WTC11 (cell line): ENCODE measurements at regions of chr1 and their contacts with region 1.

Region 1: DNA sequence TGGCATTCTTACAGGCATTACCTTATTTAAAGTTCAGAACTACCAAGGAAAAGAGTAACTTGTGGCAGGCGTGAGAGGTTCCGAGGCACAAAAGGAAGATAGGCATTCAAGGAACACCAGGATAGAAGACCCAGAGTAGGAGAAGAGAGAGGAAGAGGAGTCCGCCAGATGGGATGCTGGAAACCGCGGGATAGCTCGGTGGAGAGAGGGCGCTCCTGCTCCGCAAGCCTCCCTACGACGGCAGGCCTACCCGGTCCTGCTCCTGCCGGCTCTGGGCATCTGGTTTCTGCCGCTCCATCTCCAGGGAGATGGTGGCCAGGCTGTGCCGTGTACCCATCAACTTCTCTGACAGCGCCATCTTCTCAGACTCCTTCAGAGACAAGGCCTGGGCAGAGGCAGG is 5.4 kb upstream of the NBPF1 start:
- DNase-seq: peak; percentile 78
- ATAC-seq: peak; percentile 29
- H3K4me3 Mint-ChIP-seq: no peak overlapping the region
- H3K27ac Mint-ChIP-seq: no peak overlapping the region
- H3K4me1 Mint-ChIP-seq: no peaks in the 10 kb centered on the region
- H3K27me3 Mint-ChIP-seq: no peaks in the 10 kb centered on the region
- CTCF ChIP-seq: no peak

Region 2: GRCh38 chr1:16293538-16293937 is 325.2 kb before region 1 on chr1:
- CTCF ChIA-PET with region 1: no interaction called
- POLR2A ChIA-PET with region 1: no interaction called
- DNase-seq: no peak
- ATAC-seq: no peak
- H3K4me3 Mint-ChIP-seq: no peak overlapping the region
- H3K27ac Mint-ChIP-seq: no peak overlapping the region
- H3K4me1 Mint-ChIP-seq: peaks cover 8% of the 10 kb centered on the region
- H3K27me3 Mint-ChIP-seq: no peaks in the 10 kb centered on the region
- CTCF ChIP-seq: no peak

Region 3: GRCh38 chr1:16607433-16607851 is 11.3 kb before region 1 on chr1:
- CTCF ChIA-PET with region 1: interaction called, 56 read pairs
- POLR2A ChIA-PET with region 1: interaction called, 3 read pairs
- DNase-seq: no peak
- ATAC-seq: no peak
- H3K4me3 Mint-ChIP-seq: no peak overlapping the region
- H3K27ac Mint-ChIP-seq: no peak overlapping the region
- H3K4me1 Mint-ChIP-seq: no peaks in the 10 kb centered on the region
- H3K27me3 Mint-ChIP-seq: no peaks in the 10 kb centered on the region
- CTCF ChIP-seq: no peak

Region 4: GRCh38 chr1:16644193-16644481 is 25.4 kb after region 1 on chr1:
- CTCF ChIA-PET with region 1: interaction called, 14 read pairs
- POLR2A ChIA-PET with region 1: no interaction called
- DNase-seq: no peak
- ATAC-seq: peak; percentile 5
- H3K4me3 Mint-ChIP-seq: no peak overlapping the region
- H3K27ac Mint-ChIP-seq: no peak overlapping the region
- H3K4me1 Mint-ChIP-seq: no peaks in the 10 kb centered on the region
- H3K27me3 Mint-ChIP-seq: peaks cover 10% of the 10 kb centered on the region
- CTCF ChIP-seq: no peak

Region 5: GRCh38 chr1:16727190-16728111 is 108.7 kb after region 1 on chr1:
- CTCF ChIA-PET with region 1: interaction called, 14 read pairs
- POLR2A ChIA-PET with region 1: no interaction called
- DNase-seq: peak; percentile 63
- ATAC-seq: peak; percentile 89
- H3K4me3 Mint-ChIP-seq: no peak overlapping the region
- H3K27ac Mint-ChIP-seq: no peak overlapping the region
- H3K4me1 Mint-ChIP-seq: 0 out of 2 replicates have a peak, but pooled peaks cover 5% of the 10 kb centered on the region
- H3K27me3 Mint-ChIP-seq: no peaks in the 10 kb centered on the region
- CTCF ChIP-seq: no peak

Region 6: DNA sequence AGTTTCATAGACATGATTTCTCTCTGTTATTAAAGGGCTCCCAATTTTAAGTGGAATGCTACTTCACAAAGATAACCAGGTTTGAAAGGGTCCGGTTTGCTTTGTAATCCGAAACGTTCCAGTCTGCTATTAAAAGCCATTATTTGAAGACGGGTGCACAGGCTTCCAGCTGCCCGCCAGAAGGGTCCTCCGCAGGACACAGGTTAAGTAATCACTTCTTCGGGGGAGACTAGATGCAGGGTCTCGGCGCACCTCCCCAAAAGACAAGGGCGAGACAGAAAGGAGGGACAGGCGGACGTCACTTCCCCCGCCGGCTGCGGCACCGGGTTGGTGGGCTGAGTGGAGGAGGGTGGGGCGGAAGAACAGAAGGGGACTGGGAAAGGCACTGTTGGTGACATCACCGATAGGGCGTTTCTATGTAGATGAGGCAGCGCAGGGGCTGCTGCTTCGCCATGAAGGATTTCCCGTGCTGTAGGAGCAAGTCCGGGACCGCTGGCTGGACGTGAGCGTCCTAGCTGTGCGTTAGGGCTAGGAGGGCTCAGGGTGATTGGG is 285.9 kb after region 1 on chr1:
- CTCF ChIA-PET with region 1: interaction called, 16 read pairs
- POLR2A ChIA-PET with region 1: interaction called, 6 read pairs
- DNase-seq: peak; percentile 97
- ATAC-seq: peak; percentile 96
- H3K4me3 Mint-ChIP-seq: no peak overlapping the region
- H3K27ac Mint-ChIP-seq: no peak overlapping the region
- H3K4me1 Mint-ChIP-seq: peaks cover 15% of the 10 kb centered on the region
- H3K27me3 Mint-ChIP-seq: no peaks in the 10 kb centered on the region
- CTCF ChIP-seq: no peak

Region 7: DNA sequence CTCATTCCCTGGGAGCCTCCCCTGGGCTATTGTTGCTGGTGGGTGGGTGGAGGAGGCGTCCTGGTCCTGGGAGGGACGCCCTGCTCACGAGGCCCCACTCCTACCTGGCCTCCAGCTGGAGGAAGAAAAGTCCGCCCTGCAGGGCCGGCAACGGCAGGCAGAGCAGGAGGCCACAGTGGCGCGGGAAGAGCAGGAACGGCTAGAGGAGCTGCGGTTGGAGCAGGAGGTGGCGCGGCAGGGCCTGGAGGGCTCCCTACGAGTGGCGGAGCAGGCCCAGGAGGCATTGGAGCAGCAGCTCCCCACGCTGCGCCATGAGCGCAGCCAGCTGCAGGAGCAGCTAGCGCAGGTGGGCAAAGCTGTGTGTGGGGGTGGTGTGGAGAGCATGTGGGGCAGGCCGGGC is 327.9 kb after region 1 on chr1:
- CTCF ChIA-PET with region 1: interaction called, 20 read pairs
- POLR2A ChIA-PET with region 1: no interaction called
- DNase-seq: no peak
- ATAC-seq: no peak
- H3K4me3 Mint-ChIP-seq: no peak overlapping the region
- H3K27ac Mint-ChIP-seq: no peak overlapping the region
- H3K4me1 Mint-ChIP-seq: no peaks in the 10 kb centered on the region
- H3K27me3 Mint-ChIP-seq: no peaks in the 10 kb centered on the region
- CTCF ChIP-seq: no peak

Region 8: DNA sequence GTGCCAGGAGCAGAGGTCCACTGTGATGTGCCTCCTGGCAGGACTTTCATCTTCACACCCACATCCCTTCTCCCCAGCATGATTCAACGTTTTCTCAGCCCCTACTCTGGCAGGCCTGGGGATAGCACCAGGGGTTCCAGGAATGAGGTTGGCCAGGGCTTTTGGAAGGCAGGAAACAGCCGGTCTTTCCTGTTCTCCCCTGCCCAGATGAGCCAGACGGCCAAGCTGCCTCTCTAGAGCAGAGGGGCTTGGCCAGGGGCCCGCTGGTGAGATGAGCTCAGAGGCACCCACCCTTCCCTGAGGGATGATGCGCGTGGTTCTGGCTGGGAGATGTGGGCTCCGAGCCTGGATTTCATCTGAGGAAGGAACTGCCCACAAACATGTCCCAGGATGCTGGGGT is 366.0 kb after region 1 on chr1:
- CTCF ChIA-PET with region 1: interaction called, 15 read pairs
- POLR2A ChIA-PET with region 1: no interaction called
- DNase-seq: no peak
- ATAC-seq: no peak
- H3K4me3 Mint-ChIP-seq: no peak overlapping the region
- H3K27ac Mint-ChIP-seq: no peak overlapping the region; the same call in 1 of the 2 replicates
- H3K4me1 Mint-ChIP-seq: peaks cover 18% of the 10 kb centered on the region
- H3K27me3 Mint-ChIP-seq: no peaks in the 10 kb centered on the region; the same call in 1 of the 2 replicates
- CTCF ChIP-seq: no peak